Testis (tissue), 5 donors: ENCODE measurements at regions of chr10 and their contacts with region 1.

Region 1: DNA sequence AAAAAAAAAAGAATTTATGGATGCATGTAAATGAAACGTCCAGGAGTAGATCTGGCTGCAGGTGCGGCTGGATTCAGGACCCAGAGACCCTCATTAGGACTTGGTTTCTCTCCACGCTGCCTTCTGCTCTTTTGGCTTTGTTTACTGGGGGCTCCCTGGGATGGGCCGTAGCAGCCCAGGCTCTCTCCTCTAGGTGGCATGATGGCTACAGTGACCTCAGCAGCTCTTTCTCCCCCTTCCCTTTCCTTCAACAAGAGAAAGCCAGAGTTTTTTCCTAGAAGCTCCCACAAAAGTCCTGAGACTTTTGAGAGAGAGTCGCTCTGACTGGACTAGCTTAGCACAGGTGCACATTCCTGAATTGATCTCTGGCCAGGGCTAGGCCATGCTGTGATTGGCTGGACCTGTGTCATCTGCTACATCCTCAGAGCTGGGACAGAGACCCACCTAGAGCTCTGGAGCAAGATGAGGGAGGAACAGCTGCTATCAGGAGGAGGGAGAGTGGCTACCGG is 67.8 kb upstream of the PDCD4 start:
- DNase-seq: peak; percentile 71
- H3K4me3 ChIP-seq: no peak overlapping the region
- H3K27ac ChIP-seq: no peak overlapping the region
- H3K4me1 ChIP-seq: peaks cover 13% of the 10 kb centered on the region
- H3K27me3 ChIP-seq: no peaks in the 10 kb centered on the region
- CTCF ChIP-seq: peak; percentile 16 to 46 (median 45)
- POLR2A ChIP-seq: no peak

Region 2: DNA sequence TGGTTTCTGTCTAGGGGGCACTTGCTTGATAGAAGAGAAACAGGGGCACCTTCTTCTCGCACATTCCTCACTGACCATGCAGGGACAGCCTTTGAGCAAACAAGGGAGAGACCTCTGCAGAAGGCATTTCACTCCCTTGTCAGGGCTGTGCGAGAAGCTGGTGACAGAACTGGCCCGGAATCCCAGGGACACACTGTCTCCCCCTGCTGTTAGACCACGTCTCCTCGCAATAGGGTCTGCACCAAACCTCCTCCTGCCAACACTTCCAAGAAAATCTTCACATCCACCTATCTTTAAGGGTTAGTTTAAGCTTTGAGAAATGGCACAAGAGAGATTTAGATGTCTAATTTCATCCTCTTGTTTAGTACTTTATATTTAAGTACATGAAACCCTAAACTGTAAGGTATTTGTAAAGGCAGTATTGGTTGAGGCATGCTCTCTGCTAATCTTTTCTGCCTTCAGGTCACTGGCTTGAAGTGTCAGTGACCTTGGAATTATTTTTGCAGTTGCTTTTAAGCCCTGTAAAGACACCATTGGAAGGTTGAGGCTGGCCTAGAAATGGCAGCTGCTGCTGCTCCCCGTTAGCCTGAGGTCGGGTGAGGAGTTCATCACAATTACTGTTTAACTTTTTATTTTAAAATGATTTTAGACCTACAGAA is 122.7 kb before region 1 on chr10:
- intact Hi-C with region 1: no loop called
- DNase-seq: peak; percentile 51
- H3K4me3 ChIP-seq: no peak overlapping the region
- H3K27ac ChIP-seq: no peak overlapping the region
- H3K4me1 ChIP-seq: no peaks in the 10 kb centered on the region
- H3K27me3 ChIP-seq: no peaks in the 10 kb centered on the region
- CTCF ChIP-seq: peak in 1 of 3 experiments; percentile 27
- POLR2A ChIP-seq: no peak

Region 3: DNA sequence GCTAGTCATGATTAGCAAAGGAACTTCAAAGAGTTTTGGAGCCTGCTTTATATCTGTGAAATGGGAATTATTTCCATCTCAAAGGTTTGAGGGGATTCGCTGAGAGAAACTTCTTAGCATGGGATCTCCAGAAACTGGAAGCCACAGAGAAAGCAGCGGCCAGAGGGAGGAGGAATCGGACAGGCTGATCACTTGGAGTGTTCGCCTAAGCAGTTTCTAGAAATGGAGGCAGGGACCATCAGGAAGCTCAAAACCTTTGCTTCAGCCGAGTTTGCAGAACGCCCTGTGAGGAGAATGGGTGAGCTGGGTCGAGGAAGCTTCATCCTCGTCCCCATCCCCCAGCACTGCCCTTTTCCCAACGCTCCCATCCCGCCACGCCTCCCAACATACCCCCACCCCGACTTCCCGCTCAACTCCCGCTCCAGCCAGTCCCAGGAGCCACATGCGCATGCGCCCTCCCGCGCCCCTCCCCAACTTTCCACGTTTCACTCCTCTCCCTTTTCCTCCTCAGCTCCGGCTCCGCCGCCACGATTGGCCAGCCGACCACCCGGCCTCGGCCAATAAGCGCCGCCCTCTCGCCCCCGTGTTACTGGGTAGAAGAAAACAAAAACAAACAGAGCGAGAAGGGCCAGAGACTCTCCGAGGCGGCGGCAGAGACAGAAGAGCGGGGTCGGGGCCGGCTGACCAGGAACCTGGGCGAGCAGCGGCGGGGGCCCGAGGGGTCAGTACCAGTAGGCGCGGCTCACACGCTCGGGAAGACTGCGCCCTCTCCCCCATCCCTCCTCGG is 67.6 kb after region 1 on chr10 and contains the start of gene PDCD4:
- intact Hi-C with region 1: loop called (anchors 10 kb)
- DNase-seq: peak; percentile 99
- H3K4me3 ChIP-seq: peak within 1 kb of the TSS; percentile 74 to 97
- H3K27ac ChIP-seq: peak within 1 kb of the TSS; percentile 87 to 98
- H3K4me1 ChIP-seq: peaks cover 39% of the 10 kb centered on the region
- H3K27me3 ChIP-seq: no peaks in the 10 kb centered on the region
- CTCF ChIP-seq: no peak
- POLR2A ChIP-seq: peak; percentile 81
- total RNA-seq, gene PDCD4: 64.0 to 71.1 TPM

Region 4: DNA sequence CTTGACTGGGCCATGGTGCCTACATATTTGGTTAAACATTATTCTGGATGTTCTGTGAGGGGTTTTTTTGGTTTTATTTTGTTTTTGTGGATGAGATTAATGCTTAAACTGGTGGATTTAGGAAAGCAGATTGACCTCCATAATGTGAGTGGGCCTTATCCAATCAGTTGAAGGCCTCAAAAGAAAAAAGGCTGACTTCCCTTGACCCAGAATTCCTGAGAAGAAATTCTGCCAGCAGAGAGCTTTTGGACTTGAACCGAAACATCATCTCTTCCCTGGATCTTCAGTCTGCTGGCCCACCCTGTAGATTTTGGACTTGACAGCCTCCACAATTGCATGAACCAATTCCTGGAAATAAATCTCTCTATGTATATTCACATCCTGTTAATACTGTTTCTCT is 367.3 kb after region 1 on chr10:
- intact Hi-C with region 1: no loop called
- DNase-seq: no peak
- H3K4me3 ChIP-seq: no peak overlapping the region
- H3K27ac ChIP-seq: no peak overlapping the region
- H3K4me1 ChIP-seq: no peaks in the 10 kb centered on the region
- H3K27me3 ChIP-seq: no peaks in the 10 kb centered on the region
- CTCF ChIP-seq: no peak
- POLR2A ChIP-seq: no peak